A673 (cell line): ENCODE measurements at regions of chr5 and their contacts with region 1.

Region 1: GRCh38 chr5:58849921-58850667 is 267.2 kb downstream of the RAB3C start:
- DNase-seq: peak; percentile 64
- H3K4me3 ChIP-seq: no peak overlapping the region
- H3K27ac ChIP-seq: no peak overlapping the region
- H3K4me1 ChIP-seq: no peaks in the 10 kb centered on the region
- H3K27me3 ChIP-seq: peaks cover 6% of the 10 kb centered on the region
- CTCF ChIP-seq: peak; percentile 57

Region 2: GRCh38 chr5:57298295-57298984 is 1551.7 kb before region 1 on chr5:
- CTCF ChIA-PET with region 1: no interaction called
- POLR2A ChIA-PET with region 1: no interaction called
- intact Hi-C with region 1: loop called (anchors 5 kb)
- DNase-seq: peak; percentile 84
- H3K4me3 ChIP-seq: no peak overlapping the region
- H3K27ac ChIP-seq: no peak overlapping the region
- H3K4me1 ChIP-seq: peaks cover 6% of the 10 kb centered on the region
- H3K27me3 ChIP-seq: no peaks in the 10 kb centered on the region
- CTCF ChIP-seq: peak; percentile 79

Region 3: DNA sequence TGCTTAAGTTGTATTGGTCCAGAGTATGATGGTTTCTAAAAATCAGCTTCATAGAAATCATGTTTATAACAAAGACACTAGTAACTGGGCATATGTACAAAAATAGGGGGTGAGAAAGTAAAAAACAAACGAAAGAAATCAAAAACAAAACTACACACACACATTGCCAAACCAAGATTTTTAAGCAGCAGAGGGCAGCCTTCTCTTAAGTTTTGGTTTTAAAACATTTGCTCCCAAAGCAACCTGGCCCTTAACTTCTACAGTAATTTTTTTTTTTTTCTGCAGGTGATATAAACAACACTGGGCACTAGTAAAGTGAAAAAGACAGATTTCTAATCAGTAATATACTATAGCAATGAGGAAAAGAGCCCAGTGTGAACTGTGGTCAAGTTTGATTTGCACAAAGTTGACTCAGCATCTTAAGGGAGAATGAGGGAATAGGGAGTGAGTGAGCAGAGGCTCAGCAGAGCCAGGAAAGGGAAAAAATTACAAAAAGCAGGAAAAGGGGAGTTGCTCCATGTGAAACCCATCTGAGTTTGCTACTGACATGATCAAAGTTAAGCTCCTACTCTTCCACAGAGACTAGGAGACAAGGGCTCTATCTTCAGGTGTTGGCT is 372.2 kb before region 1 on chr5:
- CTCF ChIA-PET with region 1: no interaction called
- POLR2A ChIA-PET with region 1: no interaction called
- intact Hi-C with region 1: loop called (anchors 5 kb)
- DNase-seq: no peak
- H3K4me3 ChIP-seq: no peak overlapping the region
- H3K27ac ChIP-seq: no peak overlapping the region
- H3K4me1 ChIP-seq: no peaks in the 10 kb centered on the region
- H3K27me3 ChIP-seq: no peaks in the 10 kb centered on the region
- CTCF ChIP-seq: peak; percentile 43; the same call in 1 of the 2 replicates

Region 4: GRCh38 chr5:58498340-58498942 is 351.7 kb before region 1 on chr5:
- CTCF ChIA-PET with region 1: interaction called, 4 read pairs
- POLR2A ChIA-PET with region 1: no interaction called
- intact Hi-C with region 1: loop called (anchors 1 kb)
- DNase-seq: peak; percentile 48
- H3K4me3 ChIP-seq: no peak overlapping the region
- H3K27ac ChIP-seq: no peak overlapping the region
- H3K4me1 ChIP-seq: no peaks in the 10 kb centered on the region
- H3K27me3 ChIP-seq: no peaks in the 10 kb centered on the region
- CTCF ChIP-seq: peak; percentile 81

Region 5: DNA sequence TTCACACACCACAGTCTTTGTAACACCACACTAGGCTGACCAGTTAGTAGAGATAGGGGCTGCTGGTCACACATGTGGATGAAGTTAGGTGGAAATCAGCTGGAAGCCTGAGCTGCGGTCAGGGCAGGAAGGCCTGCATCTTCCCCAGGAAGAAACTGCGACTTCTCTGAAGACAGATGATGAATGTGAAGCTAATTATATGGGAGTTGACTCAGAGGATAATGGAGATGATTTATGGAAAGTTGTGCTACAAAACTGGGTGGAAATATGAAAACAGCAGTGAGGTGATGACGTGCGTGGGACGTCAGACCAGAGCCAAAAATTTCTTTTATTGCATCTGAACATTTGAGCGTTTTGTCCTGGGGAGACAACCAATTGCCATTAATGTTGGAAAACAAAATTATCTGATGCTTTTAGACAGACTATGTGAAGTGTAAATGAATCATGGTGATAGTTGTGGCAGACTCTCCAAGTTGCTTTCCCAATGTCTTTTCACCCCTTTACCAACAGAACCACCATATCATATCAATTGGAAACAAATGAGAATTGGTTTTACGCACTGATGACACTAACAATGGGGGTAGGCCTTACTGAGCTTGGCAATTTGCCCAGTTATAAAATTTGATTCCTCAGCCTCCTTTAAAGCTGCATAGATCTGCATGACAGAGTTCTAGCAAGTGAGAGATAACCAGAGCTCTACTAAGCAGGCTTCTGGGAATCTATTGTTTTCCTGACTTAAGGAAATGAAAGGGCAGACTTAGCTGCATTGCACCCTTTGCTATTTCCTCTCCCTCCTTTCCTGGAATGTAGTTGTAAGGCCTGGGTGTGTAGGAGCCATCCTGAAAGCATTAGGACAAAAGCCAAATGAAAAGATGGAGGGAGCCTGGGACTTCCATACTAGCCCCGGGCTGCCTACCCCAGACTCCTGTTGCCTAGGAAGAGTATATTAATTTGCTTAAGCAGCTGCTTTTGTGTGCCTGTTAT is 183.2 kb before region 1 on chr5:
- CTCF ChIA-PET with region 1: no interaction called
- POLR2A ChIA-PET with region 1: no interaction called
- intact Hi-C with region 1: no loop called
- DNase-seq: peak; percentile 50
- H3K4me3 ChIP-seq: no peak overlapping the region
- H3K27ac ChIP-seq: no peak overlapping the region
- H3K4me1 ChIP-seq: peaks cover 15% of the 10 kb centered on the region
- H3K27me3 ChIP-seq: no peaks in the 10 kb centered on the region
- CTCF ChIP-seq: no peak